ENCODE measurements at regions of chr22 and their contacts with region 1.

Region 1: DNA sequence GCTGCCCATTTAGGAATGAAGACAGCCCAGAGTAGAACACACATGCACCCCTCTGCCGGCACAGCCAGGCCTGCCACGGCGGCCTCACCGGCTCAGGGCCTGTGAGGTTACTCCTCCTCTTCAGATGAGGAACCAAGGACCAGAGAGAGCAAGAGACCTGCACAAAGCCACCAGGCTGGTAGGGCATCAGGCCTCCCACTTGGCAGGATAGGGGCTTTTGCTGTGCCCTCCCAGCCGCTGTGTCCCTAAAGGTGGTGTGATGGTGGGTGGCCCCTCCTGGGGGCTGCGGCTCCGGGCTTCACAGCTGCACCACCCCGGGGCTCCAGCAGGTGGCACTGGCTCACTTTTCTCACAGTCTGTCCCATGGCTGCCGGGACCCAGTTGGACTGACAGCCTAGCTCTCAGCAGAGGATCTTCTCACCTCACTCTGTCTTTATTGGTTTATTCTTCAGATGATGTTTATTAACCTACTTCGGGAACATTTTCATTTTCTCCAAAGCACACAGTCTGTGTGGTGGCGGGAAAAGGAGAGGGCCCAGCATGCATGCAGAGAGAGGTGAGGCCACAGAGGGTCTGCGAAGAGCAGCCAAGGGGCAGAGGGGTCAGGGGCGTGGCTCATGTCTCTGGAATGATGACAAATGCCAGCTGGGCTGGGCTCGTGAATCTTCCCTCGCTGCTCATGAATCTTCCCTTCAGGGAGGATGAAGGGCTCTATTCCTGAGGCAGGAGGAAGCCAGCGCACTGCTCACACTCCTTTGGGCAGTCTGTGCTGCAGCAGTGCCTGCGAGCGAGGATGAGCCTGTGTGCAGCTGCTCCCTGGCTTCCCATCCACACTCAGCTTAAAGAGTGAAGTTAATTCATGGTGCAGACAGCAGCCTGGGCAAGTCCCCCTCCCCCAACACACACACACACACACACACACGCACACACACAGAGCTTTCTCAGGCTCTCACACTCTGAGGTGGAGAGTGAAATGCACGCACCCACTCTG is 101.1 kb upstream of the PITPNB start:
- DNase-seq: peak; percentile 88

Region 2: DNA sequence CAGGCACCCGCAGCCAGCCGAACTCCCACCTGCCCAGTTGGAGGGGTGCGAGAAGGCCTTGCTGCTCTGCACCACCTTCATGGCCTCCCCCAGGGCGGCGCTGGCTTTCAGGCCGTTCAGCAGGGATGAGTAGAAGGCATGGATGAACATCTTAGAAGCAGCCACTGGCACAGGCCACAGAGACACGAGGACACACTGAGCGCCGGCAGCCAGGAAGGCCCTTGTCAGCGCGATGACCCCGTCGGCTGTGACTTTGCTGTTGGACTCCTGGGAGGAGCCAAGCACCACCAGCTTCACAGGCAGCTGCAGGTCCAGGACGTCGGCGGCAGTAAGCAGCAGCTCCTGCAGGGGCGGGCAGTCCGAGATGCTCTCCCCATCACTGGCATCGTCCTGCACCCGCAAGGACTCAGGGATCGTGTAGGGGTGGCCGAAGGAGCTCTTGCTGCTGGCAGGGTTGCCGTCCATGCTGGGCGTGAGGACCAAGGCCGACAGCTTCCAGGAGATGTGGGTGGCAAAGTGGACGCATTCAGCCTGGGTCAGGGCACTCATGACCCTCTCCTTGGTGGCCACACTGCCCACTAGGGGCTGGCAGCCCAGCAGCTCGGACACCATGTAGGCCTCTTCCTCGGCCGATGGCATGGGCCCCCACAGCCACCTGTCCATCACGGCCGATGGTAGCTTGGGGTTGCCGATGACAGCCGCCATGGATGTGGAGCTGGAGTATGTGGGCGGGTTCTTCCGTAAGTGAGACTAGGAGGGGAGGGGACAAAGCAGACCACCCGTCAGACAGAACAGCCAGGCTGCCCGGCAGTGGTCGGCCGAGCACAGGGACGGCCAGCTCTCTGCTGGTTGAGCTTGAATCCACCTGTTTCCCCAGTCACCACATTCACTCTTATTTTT is 21.4 kb before region 1 on chr22:
- intact Hi-C with region 1: loop called in 1 of 2 experiments (anchors 1 kb)
- DNase-seq: no peak